Gastrocnemius medialis (tissue), 4 donors: ENCODE measurements at regions of chr1 and their contacts with region 1.

Region 1: DNA sequence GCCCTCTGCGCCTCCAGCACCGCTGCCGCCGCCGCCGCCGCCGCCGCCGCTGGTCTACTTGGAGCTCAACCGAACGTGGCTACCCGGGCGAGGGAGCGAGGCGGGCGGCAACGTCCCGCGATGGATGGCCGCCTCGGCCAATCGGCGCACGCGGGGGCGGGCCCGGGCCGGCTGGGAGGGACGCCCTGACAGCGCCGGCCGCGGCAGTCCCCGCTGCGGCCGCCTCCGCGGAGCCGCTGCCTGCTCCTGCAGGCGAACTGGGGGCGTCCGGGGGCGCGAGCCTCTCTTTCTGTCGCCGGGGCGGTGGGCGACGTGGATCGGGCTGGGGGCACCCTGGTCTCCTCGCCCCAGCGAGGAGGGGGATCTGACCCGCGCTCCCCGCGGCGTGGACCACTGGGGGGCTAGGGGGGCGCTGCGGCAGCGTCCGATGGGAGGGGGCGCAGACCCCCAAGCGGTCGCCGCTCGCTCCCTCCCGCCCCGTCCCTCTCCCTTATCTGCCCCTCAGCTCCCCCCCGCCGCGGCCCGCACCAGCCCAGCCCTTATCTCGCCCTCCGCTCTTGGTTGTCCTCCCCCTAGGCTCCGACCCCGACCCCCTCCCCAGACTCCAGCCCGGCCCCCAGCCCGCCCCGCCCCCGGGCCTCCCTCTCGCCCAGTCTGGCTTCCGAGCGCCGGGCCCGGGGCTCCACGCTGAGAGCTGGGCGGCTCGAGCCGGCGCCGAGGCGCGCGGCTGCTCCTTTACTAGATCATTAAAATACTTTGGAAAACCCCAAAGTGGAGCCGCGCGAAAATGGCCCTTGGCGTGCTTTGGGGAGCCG is at the start of gene SSBP3:
- DNase-seq: peak; percentile 87 to 90
- ATAC-seq: peak; percentile 65 to 80
- H3K4me3 ChIP-seq: peak within 1 kb of the TSS; percentile 74 to 93 (median 82)
- H3K27ac ChIP-seq: peak within 1 kb of the TSS; percentile 90 to 98 (median 94)
- H3K4me1 ChIP-seq: peaks cover 49 to 50% of the 10 kb centered on the region in 2 donors
- H3K27me3 ChIP-seq: no peaks in the 10 kb centered on the region
- CTCF ChIP-seq: peak in 3 of 5 experiments; percentile 19 to 32 (median 22)
- POLR2A ChIP-seq: peak; percentile 93 to 97
- total RNA-seq, gene SSBP3: 3.6 to 21.0 (median 14.9) TPM

Region 2: DNA sequence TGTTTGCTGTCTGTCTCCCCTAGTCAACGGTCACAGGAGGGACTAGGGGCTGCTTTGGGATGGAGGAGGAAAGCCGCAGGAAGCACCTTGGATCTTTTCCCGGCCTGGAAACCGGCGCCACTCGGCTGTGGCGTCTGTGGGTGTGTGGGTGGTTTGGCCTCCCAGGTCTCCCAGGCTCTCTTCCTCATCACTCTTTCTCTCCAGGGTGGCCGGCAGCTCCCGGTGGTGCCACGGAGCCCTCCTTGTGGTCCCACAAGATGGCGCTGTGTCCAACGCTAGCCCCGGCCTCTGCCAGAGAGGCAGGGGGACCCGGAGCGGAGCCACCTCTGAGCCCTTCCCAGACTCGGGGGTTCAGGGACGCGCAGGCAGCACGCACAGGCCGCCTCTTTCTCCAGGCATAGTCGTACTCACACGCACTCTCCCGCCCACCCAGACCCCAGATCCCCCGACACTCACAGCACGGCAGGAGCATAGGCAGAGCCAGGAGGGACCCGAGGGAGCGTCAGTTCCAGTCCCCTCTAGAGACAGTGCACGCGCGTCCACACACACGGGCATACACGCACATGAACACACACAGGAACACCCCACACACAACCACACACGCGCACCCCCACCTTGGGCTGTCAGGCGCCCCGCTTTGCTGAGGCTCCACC is 284.9 kb before region 1 on chr1:
- in situ Hi-C with region 1: loop called in 2 of 4 experiments (anchors 5 to 10 kb)
- intact Hi-C with region 1: loop called (anchors 2 kb)
- DNase-seq: peak; percentile 51 to 73
- ATAC-seq: peak; percentile 33 to 72
- H3K4me3 ChIP-seq: peak overlapping the region; percentile 35 to 49 (median 42)
- H3K27ac ChIP-seq: no peak overlapping the region
- H3K4me1 ChIP-seq: peaks cover 10 to 17% of the 10 kb centered on the region in 2 donors
- H3K27me3 ChIP-seq: no peaks in the 10 kb centered on the region
- CTCF ChIP-seq: peak; percentile 67 to 88 (median 79)
- POLR2A ChIP-seq: no peak

Region 3: GRCh38 chr1:54273092-54273794 is 133.3 kb before region 1 on chr1:
- in situ Hi-C with region 1: no loop called
- intact Hi-C with region 1: loop called (anchors 1 kb)
- DNase-seq: peak; percentile 84 to 91
- ATAC-seq: peak; percentile 82 to 84
- H3K4me3 ChIP-seq: peak overlapping the region; percentile 30 to 43 (median 36)
- H3K27ac ChIP-seq: peak overlapping the region; percentile 89 to 92 (median 92)
- H3K4me1 ChIP-seq: peaks cover 74 to 80% of the 10 kb centered on the region in 2 donors
- H3K27me3 ChIP-seq: no peaks in the 10 kb centered on the region
- CTCF ChIP-seq: peak; percentile 59 to 82 (median 67)
- POLR2A ChIP-seq: peak; percentile 21

Region 4: DNA sequence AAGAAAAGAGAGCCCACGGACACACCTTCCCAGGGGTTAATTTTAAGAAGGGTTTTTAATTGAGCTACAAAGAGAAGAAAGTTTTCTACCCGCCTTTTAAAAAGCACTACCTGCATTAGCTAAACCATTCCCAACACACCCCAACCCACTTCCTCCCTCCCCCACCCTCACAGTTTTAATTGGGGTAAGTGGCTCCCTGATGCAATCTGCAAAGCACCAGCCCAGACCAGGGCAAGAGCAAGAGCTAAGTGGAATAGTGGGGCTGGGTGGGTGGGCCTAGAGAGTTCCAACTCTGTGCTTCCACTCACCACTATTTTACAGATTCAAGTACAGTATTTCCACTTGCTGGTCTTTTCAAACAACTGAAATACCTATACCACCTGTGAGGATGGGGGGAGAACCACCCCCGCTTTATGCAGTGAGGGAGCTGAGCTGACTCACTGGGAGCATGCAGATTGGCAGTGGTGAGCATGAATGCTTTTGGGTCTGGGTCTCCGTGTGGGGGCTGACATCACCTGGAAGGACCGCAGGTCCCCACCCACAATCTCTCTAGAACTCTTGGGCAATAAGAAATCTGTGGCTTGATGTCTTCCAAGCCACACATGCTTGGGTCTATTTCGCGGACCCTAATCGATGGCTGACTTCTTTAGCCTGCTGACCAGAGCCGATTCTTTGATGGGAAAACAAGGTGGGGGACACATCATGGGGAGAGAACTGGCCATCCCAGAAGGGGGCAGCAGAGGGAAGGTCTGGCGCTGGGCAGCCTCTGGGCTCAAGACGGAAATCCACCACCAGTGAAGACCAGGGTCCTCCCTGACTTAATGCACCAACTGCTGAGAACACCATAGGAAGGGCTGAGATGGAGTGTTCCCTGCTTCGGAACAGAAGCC is 95.9 kb before region 1 on chr1:
- in situ Hi-C with region 1: no loop called
- intact Hi-C with region 1: loop called (anchors 1 kb)
- DNase-seq: peak in 1 of 2 donors; percentile 40
- ATAC-seq: peak in 1 of 2 donors; percentile 30
- H3K4me3 ChIP-seq: no peak overlapping the region
- H3K27ac ChIP-seq: peak overlapping the region; percentile 64 to 72 (median 66)
- H3K4me1 ChIP-seq: peaks cover 57 to 60% of the 10 kb centered on the region in 2 donors
- H3K27me3 ChIP-seq: no peaks in the 10 kb centered on the region
- CTCF ChIP-seq: peak; percentile 46 to 66 (median 63)
- POLR2A ChIP-seq: no peak

Region 5: GRCh38 chr1:54342742-54343687 is 63.5 kb before region 1 on chr1:
- in situ Hi-C with region 1: no loop called
- intact Hi-C with region 1: no loop called
- DNase-seq: peak in 1 of 2 donors; percentile 50
- ATAC-seq: peak; percentile 61 to 66
- H3K4me3 ChIP-seq: peak overlapping the region; percentile 33 to 51 (median 41)
- H3K27ac ChIP-seq: peak overlapping the region; percentile 76 to 85 (median 82)
- H3K4me1 ChIP-seq: peaks cover 55 to 56% of the 10 kb centered on the region in 2 donors
- H3K27me3 ChIP-seq: no peaks in the 10 kb centered on the region
- CTCF ChIP-seq: peak; percentile 32 to 49 (median 34)
- POLR2A ChIP-seq: peak in 1 of 2 donors; percentile 11

Region 6: GRCh38 chr1:54488779-54489626 is 82.5 kb after region 1 on chr1:
- in situ Hi-C with region 1: loop called in 3 of 4 experiments (anchors 5 kb)
- intact Hi-C with region 1: loop called (anchors 1 kb)
- DNase-seq: peak; percentile 51 to 62
- ATAC-seq: peak; percentile 67 to 70
- H3K4me3 ChIP-seq: peak overlapping the region; percentile 77 to 89 (median 85)
- H3K27ac ChIP-seq: peak overlapping the region; percentile 92 to 95 (median 94)
- H3K4me1 ChIP-seq: peaks cover 11 to 20% of the 10 kb centered on the region in 2 donors
- H3K27me3 ChIP-seq: no peaks in the 10 kb centered on the region
- CTCF ChIP-seq: peak; percentile 96 to 99 (median 97)
- POLR2A ChIP-seq: no peak

Region 7: DNA sequence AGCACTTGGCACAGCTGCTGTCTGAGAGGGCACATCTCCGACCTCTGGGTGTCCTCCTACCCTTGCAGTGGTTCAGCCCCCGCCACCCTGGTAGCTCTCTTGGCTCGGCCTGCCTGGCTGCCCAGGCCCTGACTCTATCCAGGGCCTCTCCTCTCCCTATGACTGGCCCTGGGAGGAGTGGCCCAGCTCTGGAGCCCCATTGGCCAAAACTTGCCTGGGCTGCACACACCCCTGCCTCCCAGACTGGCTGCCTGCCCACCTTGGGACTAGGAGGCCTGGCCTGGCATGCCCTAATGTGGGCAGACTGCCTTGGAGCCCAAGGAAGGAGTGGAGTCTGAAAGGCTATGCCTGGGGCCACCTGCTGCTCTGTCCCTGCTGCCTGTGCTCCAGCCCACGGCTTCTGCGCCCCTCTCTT is 175.1 kb after region 1 on chr1:
- in situ Hi-C with region 1: no loop called
- intact Hi-C with region 1: loop called (anchors 5 kb)
- DNase-seq: peak; percentile 95 to 99
- ATAC-seq: peak; percentile 73 to 78
- H3K4me3 ChIP-seq: no peak overlapping the region
- H3K27ac ChIP-seq: peak overlapping the region; percentile 85 to 98 (median 95)
- H3K4me1 ChIP-seq: peaks cover 63 to 69% of the 10 kb centered on the region in 2 donors
- H3K27me3 ChIP-seq: no peaks in the 10 kb centered on the region
- CTCF ChIP-seq: peak in 2 of 5 experiments; percentile 10 to 15
- POLR2A ChIP-seq: peak; percentile 74 to 86